Activated CD8-positive, alpha-beta memory T cell treated with anti-CD3 and anti-CD28 coated beads, Interleukin-2, amount 10 ng/mL, durations not matched to agents 7 days and 5 days (primary cell): ENCODE measurements at regions of chr7 and their contacts with region 1.

Region 1: DNA sequence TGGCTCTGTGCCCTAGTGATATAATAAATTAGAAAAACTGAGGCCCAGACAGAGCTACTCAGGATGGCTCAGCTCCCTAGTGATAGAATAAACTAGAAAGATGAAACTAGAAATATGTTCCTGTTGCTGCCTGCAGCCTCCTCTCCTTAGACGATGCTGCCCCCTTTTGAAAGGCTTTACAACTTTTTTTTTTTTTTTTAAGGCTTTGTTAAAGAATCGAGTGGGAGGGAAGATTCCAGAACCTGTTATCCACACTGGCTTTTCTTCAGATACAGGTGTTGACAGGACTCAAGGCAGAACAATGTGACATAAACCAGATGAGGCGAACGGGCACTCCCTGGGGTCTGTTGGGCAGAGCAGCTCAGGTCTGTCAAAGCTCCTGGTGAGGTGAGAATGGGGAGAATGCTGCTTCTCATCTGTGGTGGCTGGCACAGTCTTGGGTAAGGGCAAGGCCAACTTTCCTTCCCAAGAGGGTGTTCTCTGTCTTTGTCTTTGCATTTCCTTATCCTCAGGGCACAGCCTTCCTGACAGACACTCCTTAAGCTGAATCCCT is 175.1 kb downstream of the COBL start:
- DNase-seq: no peak
- ATAC-seq: no peak
- H3K4me3 Mint-ChIP-seq: no peak overlapping the region
- H3K27ac Mint-ChIP-seq: no peak overlapping the region
- H3K4me1 Mint-ChIP-seq: peaks cover 18% of the 10 kb centered on the region
- H3K27me3 Mint-ChIP-seq: peaks cover 13% of the 10 kb centered on the region

Region 2: GRCh38 chr7:50696810-50697582 is 444.5 kb before region 1 on chr7:
- CTCF ChIA-PET with region 1: interaction called, 11 read pairs
- DNase-seq: no peak
- ATAC-seq: peak; percentile 36
- H3K4me3 Mint-ChIP-seq: no peak overlapping the region
- H3K27ac Mint-ChIP-seq: no peak overlapping the region
- H3K4me1 Mint-ChIP-seq: peaks cover 4% of the 10 kb centered on the region
- H3K27me3 Mint-ChIP-seq: peaks cover 36% of the 10 kb centered on the region

Region 3: DNA sequence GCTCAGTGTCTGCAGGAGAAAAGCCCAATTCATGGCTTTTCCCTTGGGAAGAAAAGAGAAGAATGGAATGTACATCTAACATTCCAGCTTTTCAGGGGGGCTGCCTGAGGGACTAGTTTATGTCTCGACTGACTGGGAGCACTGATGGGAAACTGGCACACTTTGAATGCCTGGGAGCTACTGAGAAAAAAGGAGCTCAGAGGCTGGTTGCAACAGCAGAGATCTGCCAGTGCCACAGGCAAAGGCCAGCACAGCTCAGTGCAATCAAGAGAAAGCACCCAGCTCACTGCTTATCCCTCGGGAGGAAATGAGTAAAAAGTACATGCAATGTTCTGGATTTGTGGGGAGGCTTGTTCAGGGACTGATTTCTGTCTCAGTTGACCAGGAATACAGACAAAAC is 51.1 kb before region 1 on chr7:
- CTCF ChIA-PET with region 1: no interaction called
- DNase-seq: no peak
- ATAC-seq: no peak
- H3K4me3 Mint-ChIP-seq: no peak overlapping the region
- H3K27ac Mint-ChIP-seq: no peak overlapping the region
- H3K4me1 Mint-ChIP-seq: no peaks in the 10 kb centered on the region
- H3K27me3 Mint-ChIP-seq: no peaks in the 10 kb centered on the region